Naive thymus-derived CD4-positive, alpha-beta T cell (primary cell): ENCODE measurements at regions of chr12 and their contacts with region 1.

Region 1: DNA sequence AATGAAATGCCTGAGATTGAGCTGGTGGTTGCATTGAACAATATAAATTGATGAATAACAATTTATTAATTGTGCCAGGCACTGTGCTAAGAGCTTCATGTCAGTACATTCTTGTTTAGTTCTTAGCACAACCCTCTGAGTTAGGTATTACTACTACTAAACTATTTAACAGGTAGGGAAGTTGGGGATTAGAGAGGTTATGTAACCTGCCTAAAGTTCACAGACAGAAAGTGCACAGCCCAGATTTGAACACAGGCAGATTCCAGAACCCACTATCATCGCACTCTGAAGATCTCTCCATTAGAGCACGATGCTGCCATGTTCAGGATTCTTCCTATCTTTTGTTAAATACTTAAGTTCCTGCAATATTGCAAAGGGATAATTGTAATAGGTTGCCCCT is 49.3 kb downstream of the ETV6 start:
- DNase-seq: no peak
- ATAC-seq: no peak
- H3K4me3 ChIP-seq: no peak overlapping the region
- H3K4me3 Mint-ChIP-seq: no peak overlapping the region
- H3K27ac ChIP-seq: no peak overlapping the region
- H3K27ac Mint-ChIP-seq: no peak overlapping the region
- H3K4me1 ChIP-seq: no peaks in the 10 kb centered on the region
- H3K4me1 Mint-ChIP-seq: peaks cover 17 to 70% (median 36%) of the 10 kb centered on the region in 7 donors
- H3K27me3 ChIP-seq: no peaks in the 10 kb centered on the region
- H3K27me3 Mint-ChIP-seq: no peaks in the 10 kb centered on the region

Region 2: DNA sequence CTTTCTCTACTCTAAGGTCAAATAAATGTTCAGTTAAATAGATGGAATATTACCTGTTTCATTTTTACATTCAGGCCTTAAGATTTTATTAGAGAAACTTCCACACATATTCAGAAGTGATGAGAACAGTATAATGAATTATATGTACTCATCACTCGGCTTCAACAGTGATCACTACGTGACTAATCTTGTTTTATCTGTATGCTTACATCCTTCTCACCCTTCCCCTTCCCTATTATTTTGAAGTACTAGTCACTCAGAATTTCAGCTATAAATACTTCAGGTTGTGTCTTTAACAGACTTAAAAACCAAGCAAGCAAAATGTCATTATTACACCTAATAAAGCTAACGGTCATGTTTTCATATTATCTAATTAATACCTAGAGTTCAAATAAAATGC is 14.3 kb before region 1 on chr12:
- CTCF ChIA-PET with region 1: no interaction called
- POLR2A ChIA-PET with region 1: no interaction called
- intact Hi-C with region 1: no loop called
- DNase-seq: no peak
- ATAC-seq: peak; percentile 70
- H3K4me3 ChIP-seq: no peak overlapping the region
- H3K4me3 Mint-ChIP-seq: no peak overlapping the region
- H3K27ac ChIP-seq: no peak overlapping the region
- H3K27ac Mint-ChIP-seq: no peak overlapping the region
- H3K4me1 ChIP-seq: peaks cover 0 to 8% of the 10 kb centered on the region in 2 donors
- H3K4me1 Mint-ChIP-seq: peaks cover 29 to 68% (median 44%) of the 10 kb centered on the region in 7 donors
- H3K27me3 ChIP-seq: no peaks in the 10 kb centered on the region
- H3K27me3 Mint-ChIP-seq: no peaks in the 10 kb centered on the region

Region 3: GRCh38 chr12:11711651-11712327 is 13.1 kb after region 1 on chr12:
- CTCF ChIA-PET with region 1: no interaction called
- POLR2A ChIA-PET with region 1: no interaction called
- intact Hi-C with region 1: loop called in 1 of 2 experiments (anchors 1 kb)
- DNase-seq: no peak
- ATAC-seq: no peak
- H3K4me3 ChIP-seq: no peak overlapping the region
- H3K4me3 Mint-ChIP-seq: no peak overlapping the region
- H3K27ac ChIP-seq: no peak overlapping the region
- H3K27ac Mint-ChIP-seq: no peak overlapping the region
- H3K4me1 ChIP-seq: no peaks in the 10 kb centered on the region
- H3K4me1 Mint-ChIP-seq: peaks cover 17 to 54% (median 31%) of the 10 kb centered on the region in 7 donors
- H3K27me3 ChIP-seq: no peaks in the 10 kb centered on the region
- H3K27me3 Mint-ChIP-seq: no peaks in the 10 kb centered on the region

Region 4: DNA sequence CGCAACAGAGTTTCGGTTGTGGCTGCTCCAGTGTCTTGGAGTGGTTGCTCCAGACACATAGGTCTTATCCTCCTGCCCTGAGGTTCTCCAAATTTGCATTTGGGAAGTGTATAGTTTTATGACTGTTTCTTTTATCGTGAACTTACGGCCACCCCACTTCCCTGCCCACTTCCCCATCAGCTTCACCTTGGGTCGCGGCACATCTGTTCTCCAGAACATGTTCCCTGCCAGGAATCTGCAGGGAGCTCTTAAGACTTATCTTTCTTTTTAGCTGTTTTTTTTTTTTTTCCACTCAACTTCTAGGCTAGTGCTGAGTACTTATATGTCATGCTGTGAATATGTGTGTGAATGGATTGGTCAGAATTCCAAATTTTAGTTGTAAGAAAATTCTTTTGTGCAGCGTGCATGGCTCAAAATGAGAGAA is 26.2 kb after region 1 on chr12:
- CTCF ChIA-PET with region 1: no interaction called
- POLR2A ChIA-PET with region 1: no interaction called
- intact Hi-C with region 1: no loop called
- DNase-seq: no peak
- ATAC-seq: no peak
- H3K4me3 ChIP-seq: no peak overlapping the region
- H3K4me3 Mint-ChIP-seq: no peak overlapping the region
- H3K27ac ChIP-seq: no peak overlapping the region
- H3K27ac Mint-ChIP-seq: peak overlapping the region in 4 of 9 donors; percentile 2 to 60 (median 39)
- H3K4me1 ChIP-seq: peaks cover 3 to 34% of the 10 kb centered on the region in 2 donors
- H3K4me1 Mint-ChIP-seq: peaks cover 40 to 72% (median 56%) of the 10 kb centered on the region in 7 donors
- H3K27me3 ChIP-seq: no peaks in the 10 kb centered on the region
- H3K27me3 Mint-ChIP-seq: no peaks in the 10 kb centered on the region

Region 5: GRCh38 chr12:11765817-11766794 is 67.4 kb after region 1 on chr12:
- CTCF ChIA-PET with region 1: no interaction called
- POLR2A ChIA-PET with region 1: no interaction called
- intact Hi-C with region 1: no loop called
- DNase-seq: peak in 4 of 9 donors; percentile 13 to 69 (median 32)
- ATAC-seq: peak; percentile 77
- H3K4me3 ChIP-seq: peak overlapping the region; percentile 12
- H3K4me3 Mint-ChIP-seq: peak overlapping the region; percentile 51 to 93 (median 70)
- H3K27ac ChIP-seq: peak overlapping the region; percentile 36
- H3K27ac Mint-ChIP-seq: peak overlapping the region; percentile 30 to 87 (median 74)
- H3K4me1 ChIP-seq: peaks cover 24 to 33% of the 10 kb centered on the region in 2 donors
- H3K4me1 Mint-ChIP-seq: peaks cover 57 to 96% (median 81%) of the 10 kb centered on the region in 7 donors
- H3K27me3 ChIP-seq: no peaks in the 10 kb centered on the region
- H3K27me3 Mint-ChIP-seq: no peaks in the 10 kb centered on the region